Activated T-helper 1 cell treated with anti-CD3 and anti-CD28 coated beads, Interleukin-12 subunit alpha, Interleukin-12 subunit beta, Interleukin-2, Interleukin-4 antibody, amounts not matched to agents 30 ng/mL and 10 ng/mL and 1 ng/mL, durations not matched to agents 14 hours and 24 hours and 36 hours (primary cell): ENCODE measurements at regions of chr1 and their contacts with region 1.

Region 1: DNA sequence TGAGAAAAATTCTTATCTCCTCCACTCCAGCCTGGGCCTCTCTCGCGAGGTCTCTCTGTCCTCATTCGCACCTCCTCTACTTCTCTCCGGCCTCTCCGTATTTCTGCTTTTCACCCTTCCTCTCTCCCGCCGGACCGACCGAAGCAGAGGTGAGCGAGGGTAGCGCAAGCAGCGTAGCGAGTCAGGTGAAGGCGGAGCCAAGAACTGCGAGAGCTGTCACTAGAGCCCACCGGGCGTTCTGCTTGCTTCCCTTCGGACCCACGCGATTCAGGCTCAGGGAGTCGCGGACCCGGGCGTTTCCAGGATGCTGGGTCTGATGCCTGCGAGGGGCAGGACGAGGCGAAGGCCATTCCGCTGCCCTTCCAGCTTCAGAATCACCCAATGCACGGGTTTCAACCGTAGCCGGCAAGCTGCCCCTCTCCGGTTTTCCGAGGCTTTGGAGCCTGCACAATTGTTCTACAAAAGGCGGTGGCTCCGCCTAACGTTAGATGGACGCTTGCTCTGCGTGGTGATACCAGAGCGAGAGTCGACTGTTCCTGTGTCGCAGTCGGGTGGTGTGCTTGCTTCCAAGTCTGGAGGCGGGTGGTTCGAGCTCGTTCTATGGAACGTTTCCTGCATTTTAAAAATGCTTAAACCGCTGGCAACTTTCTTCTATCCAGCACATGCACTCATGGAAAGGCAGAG is 310.2 kb downstream of the FAM72C start:
- DNase-seq: no peak
- H3K4me3 Mint-ChIP-seq: no peak overlapping the region
- H3K27ac Mint-ChIP-seq: no peak overlapping the region
- H3K4me1 Mint-ChIP-seq: no peaks in the 10 kb centered on the region
- H3K27me3 Mint-ChIP-seq: peaks cover 40% of the 10 kb centered on the region

Region 2: DNA sequence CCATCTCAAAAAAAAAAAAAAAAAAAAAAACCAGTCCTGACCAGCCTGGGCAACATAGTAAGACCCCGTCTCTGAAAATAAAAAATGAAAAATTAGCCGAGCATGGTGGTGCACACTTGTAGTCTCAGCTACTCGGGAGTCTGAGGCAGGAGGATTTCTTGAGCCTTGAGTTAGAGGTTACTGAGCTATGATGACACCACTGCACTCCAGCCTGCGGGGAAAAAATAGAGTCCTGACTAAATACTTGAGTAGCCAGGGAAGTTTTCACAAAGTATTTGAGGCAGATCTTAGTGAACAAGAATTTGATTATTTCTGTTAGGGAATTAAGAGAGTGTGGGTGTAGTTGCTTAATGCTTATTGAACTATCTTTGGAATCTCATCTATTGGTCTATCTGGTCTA is 25.3 kb before region 1 on chr1:
- intact Hi-C with region 1: no loop called
- DNase-seq: no peak
- H3K4me3 Mint-ChIP-seq: no peak overlapping the region
- H3K27ac Mint-ChIP-seq: no peak overlapping the region
- H3K4me1 Mint-ChIP-seq: no peaks in the 10 kb centered on the region
- H3K27me3 Mint-ChIP-seq: peaks cover 8% of the 10 kb centered on the region

Region 3: GRCh38 chr1:143651350-143651992 is 10.1 kb before region 1 on chr1:
- intact Hi-C with region 1: no loop called
- DNase-seq: no peak
- H3K4me3 Mint-ChIP-seq: no peak overlapping the region
- H3K27ac Mint-ChIP-seq: peak overlapping the region; percentile 40
- H3K4me1 Mint-ChIP-seq: no peaks in the 10 kb centered on the region
- H3K27me3 Mint-ChIP-seq: peaks cover 49% of the 10 kb centered on the region

Region 4: GRCh38 chr1:143672983-143673382 is 11.4 kb after region 1 on chr1:
- intact Hi-C with region 1: no loop called
- DNase-seq: no peak
- H3K4me3 Mint-ChIP-seq: no peak overlapping the region
- H3K27ac Mint-ChIP-seq: no peak overlapping the region
- H3K4me1 Mint-ChIP-seq: no peaks in the 10 kb centered on the region
- H3K27me3 Mint-ChIP-seq: peaks cover 12% of the 10 kb centered on the region

Region 5: GRCh38 chr1:143698016-143698415 is 36.5 kb after region 1 on chr1:
- intact Hi-C with region 1: loop called (anchors 5 kb)
- DNase-seq: no peak
- H3K4me3 Mint-ChIP-seq: no peak overlapping the region
- H3K27ac Mint-ChIP-seq: no peak overlapping the region
- H3K4me1 Mint-ChIP-seq: peaks cover 16% of the 10 kb centered on the region
- H3K27me3 Mint-ChIP-seq: peaks cover 59% of the 10 kb centered on the region

Region 6: DNA sequence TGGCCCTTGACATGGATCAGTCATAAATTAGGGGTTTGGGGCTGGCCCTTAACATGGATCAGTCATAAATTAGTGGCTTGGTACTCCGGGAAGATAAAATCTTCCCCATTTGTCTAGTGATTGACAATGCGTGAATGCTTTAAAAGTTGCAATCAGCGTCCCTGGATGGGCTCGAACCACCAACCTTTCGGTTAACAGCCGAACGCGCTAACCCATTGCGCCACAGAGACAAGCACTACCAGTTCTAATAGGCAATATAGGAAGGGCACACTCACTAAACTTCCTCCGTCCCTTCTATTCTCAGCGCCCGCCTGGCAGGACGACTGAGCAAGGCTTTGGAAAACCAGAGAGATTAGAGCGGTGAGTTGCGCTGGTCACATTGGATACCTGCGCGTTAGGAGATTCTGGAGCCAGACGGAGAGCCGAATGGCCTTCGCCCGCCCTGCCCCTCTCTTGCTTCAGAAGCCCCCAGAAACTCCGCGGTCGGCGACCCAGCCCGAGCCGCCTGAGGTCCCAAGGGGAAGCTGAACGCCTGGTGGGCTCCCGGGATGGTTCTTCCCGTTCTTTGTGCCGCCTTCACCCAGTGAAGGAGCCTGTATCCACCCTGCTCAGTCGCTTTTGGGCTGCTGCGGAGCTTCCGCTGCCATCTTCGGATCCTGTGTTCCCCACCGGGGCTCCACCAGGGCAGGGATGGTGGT is 74.4 kb after region 1 on chr1:
- intact Hi-C with region 1: no loop called
- DNase-seq: no peak
- H3K4me3 Mint-ChIP-seq: no peak overlapping the region
- H3K27ac Mint-ChIP-seq: no peak overlapping the region
- H3K4me1 Mint-ChIP-seq: peaks cover 5% of the 10 kb centered on the region
- H3K27me3 Mint-ChIP-seq: peaks cover 26% of the 10 kb centered on the region